Left ventricle myocardium inferior (tissue), 1 donor: ENCODE measurements at regions of chr16 and their contacts with region 1.

Region 1: DNA sequence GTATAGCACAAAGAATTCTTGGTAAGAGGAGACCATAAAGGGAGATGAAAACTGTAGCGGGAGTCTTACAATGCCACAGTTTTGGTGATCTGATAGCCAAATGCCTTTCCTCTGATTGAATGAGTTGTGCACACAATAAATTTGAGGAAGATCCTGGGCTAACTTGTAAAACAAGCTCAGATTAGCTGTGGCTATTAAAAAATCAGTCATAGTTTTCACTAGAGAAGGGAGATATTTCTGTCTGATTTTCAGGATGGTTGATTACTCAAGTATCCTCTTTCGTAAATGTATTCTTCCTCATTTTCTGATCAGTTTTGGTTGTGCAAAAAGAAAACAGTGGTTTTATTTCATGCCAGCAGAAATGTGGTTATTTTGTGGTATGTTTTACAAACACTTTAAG is 9.1 kb upstream of the METTL9 start:
- DNase-seq: no peak
- H3K4me3 ChIP-seq: no peak overlapping the region
- H3K27ac ChIP-seq: no peak overlapping the region
- H3K4me1 ChIP-seq: peaks cover 7% of the 10 kb centered on the region
- H3K27me3 ChIP-seq: no peaks in the 10 kb centered on the region
- CTCF ChIP-seq: no peak

Region 2: GRCh38 chr16:21617607-21618006 is 27.3 kb after region 1 on chr16:
- intact Hi-C with region 1: loop called (anchors 2 kb)
- DNase-seq: no peak
- H3K4me3 ChIP-seq: no peak overlapping the region
- H3K27ac ChIP-seq: no peak overlapping the region
- H3K4me1 ChIP-seq: peaks cover 10% of the 10 kb centered on the region
- H3K27me3 ChIP-seq: no peaks in the 10 kb centered on the region
- CTCF ChIP-seq: no peak

Region 3: GRCh38 chr16:21645261-21645721 is 55.0 kb after region 1 on chr16:
- intact Hi-C with region 1: no loop called
- DNase-seq: no peak
- H3K4me3 ChIP-seq: peak overlapping the region; percentile 55
- H3K27ac ChIP-seq: peak overlapping the region; percentile 68
- H3K4me1 ChIP-seq: peaks cover 43% of the 10 kb centered on the region
- H3K27me3 ChIP-seq: no peaks in the 10 kb centered on the region
- CTCF ChIP-seq: no peak

Region 4: GRCh38 chr16:21656795-21657768 is 66.8 kb after region 1 on chr16:
- intact Hi-C with region 1: no loop called
- DNase-seq: no peak
- H3K4me3 ChIP-seq: no peak overlapping the region
- H3K27ac ChIP-seq: no peak overlapping the region
- H3K4me1 ChIP-seq: peaks cover 10% of the 10 kb centered on the region
- H3K27me3 ChIP-seq: no peaks in the 10 kb centered on the region
- CTCF ChIP-seq: peak; percentile 89